Activated CD8-positive, alpha-beta T cell treated with anti-CD3 and anti-CD28 coated beads for 36 hours (primary cell): ENCODE measurements at regions of chr1 and their contacts with region 1.

Region 1: DNA sequence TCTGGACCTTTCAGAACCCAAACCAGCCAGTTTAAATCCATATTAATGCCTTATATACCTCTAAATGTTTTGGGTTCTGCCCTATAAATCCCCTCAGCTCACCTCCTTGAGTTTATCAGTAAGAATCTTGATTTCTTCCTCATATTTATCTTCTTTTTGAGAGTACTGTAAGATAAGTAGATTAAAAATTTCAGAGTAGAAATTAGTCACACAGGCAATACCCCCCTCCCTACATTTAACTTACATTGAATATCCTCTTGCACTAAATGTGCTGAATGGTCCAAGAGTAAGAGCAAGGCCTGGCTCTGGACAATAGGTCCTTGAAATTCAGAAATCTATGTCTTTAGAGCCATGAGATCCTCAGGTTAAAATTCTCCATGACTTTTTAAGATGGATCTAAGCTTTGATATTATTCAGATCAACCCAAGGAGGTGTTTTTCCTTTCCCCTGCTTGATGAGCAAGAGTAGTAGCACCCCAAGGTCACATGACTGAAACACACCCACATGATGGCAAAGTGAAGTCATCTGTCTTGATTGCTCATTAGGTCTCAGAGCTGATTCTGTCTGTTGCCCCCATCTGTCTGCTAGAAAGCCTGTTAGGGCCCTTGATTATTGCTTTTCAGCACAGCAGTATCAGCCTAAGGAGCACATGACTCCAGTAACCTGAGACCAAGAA is 15.8 kb upstream of the NUP210L start:
- DNase-seq: peak; percentile 86
- ATAC-seq: peak; percentile 96
- H3K4me3 Mint-ChIP-seq: no peak overlapping the region
- H3K27ac Mint-ChIP-seq: peak overlapping the region; percentile 90
- H3K4me1 Mint-ChIP-seq: peaks cover 55% of the 10 kb centered on the region
- H3K27me3 Mint-ChIP-seq: no peaks in the 10 kb centered on the region
- CTCF ChIP-seq: no peak

Region 2: GRCh38 chr1:154183045-154183915 is 12.6 kb after region 1 on chr1:
- CTCF ChIA-PET with region 1: interaction called, 4 read pairs
- POLR2A ChIA-PET with region 1: interaction called, 28 read pairs
- intact Hi-C with region 1: no loop called
- DNase-seq: peak; percentile 97
- ATAC-seq: peak; percentile 74
- H3K4me3 Mint-ChIP-seq: peak overlapping the region; percentile 97
- H3K27ac Mint-ChIP-seq: peak overlapping the region; percentile 99
- H3K4me1 Mint-ChIP-seq: peaks cover 41% of the 10 kb centered on the region
- H3K27me3 Mint-ChIP-seq: no peaks in the 10 kb centered on the region
- CTCF ChIP-seq: no peak